Stomach (tissue), 19 donors: ENCODE measurements at regions of chr7 and their contacts with region 1.

Region 1: GRCh38 chr7:518630-519483 is 789 bp downstream of the PDGFA start:
- DNase-seq: peak; percentile 89 to 94
- H3K4me3 ChIP-seq: peak overlapping the region; percentile 67 to 85 (median 76)
- H3K27ac ChIP-seq: peak overlapping the region; percentile 92 to 95 (median 94)
- H3K4me1 ChIP-seq: peaks cover 64 to 86% (median 80%) of the 10 kb centered on the region in 4 donors
- H3K27me3 ChIP-seq: peaks cover 5 to 84% (median 47%) of the 10 kb centered on the region in 3 donors
- CTCF ChIP-seq: no peak
- EP300 ChIP-seq: no peak
- POLR2A ChIP-seq: peak in 1 of 4 donors; percentile 74

Region 2: DNA sequence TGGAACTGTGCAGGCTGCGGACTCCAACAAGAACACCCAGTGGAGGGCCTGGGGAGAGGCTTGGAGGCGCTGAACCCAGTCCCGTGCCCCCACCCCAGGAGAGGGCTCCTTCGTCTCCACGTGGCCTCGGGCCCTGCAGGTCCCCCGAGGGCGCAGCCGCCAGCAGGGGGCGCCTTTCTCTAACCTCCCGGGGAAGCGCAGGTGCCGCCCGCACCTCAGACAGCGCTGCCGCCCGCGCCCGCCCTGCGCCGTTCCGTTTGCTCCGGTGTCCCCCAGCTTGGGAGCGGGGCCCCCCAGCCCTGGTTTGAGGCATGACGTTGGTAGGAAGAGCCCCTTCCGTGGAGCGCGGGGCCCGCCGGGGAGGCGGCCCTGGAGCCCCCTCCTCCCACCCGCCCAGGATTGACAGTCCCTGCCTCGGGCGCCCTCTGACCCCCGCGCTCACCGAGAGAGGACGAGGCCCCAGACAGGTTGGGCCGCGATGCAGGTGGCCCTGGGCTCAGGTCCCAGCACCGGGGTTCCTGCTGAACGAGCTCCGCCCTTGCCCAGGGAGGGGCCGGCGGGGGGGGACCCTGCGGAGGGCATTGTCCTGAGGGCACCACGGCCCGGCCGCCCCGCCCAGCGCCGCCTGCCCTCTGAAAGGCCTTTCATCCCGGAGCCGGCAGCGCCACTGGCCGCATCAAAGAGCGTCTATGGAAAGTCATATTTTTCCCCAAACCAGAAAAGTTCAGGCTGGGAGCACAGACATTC is 186.0 kb before region 1 on chr7:
- intact Hi-C with region 1: loop called (anchors 10 kb)
- DNase-seq: peak; percentile 92 to 94
- H3K4me3 ChIP-seq: peak overlapping the region; percentile 34 to 44 (median 42)
- H3K27ac ChIP-seq: peak overlapping the region; percentile 49 to 85 (median 80)
- H3K4me1 ChIP-seq: peaks cover 21 to 41% (median 39%) of the 10 kb centered on the region in 4 donors
- H3K27me3 ChIP-seq: peaks cover 0 to 37% (median 9%) of the 10 kb centered on the region in 3 donors
- CTCF ChIP-seq: peak in 5 of 7 experiments; percentile 79 to 89 (median 87)
- EP300 ChIP-seq: no peak
- POLR2A ChIP-seq: no peak

Region 3: DNA sequence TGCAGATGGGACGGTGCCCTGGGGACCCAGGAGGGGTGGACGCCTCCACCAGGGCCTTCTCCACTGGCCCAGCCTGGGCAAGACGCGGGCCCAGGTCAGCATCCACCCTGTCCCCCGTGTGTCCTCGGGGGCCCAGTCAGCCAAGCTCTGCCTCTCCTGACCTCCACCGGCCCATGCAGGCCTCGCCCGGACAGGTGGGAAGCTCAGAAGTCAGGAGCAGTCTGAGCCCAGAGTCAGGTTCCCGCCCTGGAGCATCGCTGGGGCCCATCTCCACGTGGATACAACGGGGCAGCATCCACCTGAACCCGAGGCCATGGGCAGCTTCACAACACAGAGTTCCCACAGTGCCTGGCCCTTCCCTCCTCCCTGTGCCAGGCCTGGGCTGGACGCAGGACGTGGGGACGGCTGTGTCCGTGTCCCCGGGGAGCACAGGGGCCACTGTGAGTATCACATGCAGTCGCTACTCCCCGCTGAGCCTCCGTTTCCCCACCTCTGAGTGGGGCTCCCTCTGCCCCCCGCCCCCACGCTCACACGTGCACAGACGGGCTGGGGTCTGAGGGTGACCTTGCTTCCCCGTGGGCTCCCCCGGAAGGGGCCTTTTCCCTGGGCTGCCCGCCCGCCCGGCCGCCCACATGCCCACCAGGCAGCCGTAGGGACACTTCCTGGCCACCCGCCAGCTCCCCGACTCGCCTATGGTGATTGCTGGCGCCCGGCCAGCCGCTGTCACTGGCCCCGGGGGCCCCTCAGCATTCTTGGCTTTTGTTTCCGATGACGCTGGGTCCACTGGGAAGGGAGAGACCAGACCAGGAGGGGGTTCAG is 63.5 kb before region 1 on chr7:
- intact Hi-C with region 1: no loop called
- DNase-seq: peak; percentile 82 to 95
- H3K4me3 ChIP-seq: no peak overlapping the region
- H3K27ac ChIP-seq: no peak overlapping the region
- H3K4me1 ChIP-seq: peaks cover 8 to 29% (median 22%) of the 10 kb centered on the region in 4 donors
- H3K27me3 ChIP-seq: peaks cover 0 to 53% (median 12%) of the 10 kb centered on the region in 3 donors
- CTCF ChIP-seq: no peak
- EP300 ChIP-seq: no peak
- POLR2A ChIP-seq: no peak

Region 4: DNA sequence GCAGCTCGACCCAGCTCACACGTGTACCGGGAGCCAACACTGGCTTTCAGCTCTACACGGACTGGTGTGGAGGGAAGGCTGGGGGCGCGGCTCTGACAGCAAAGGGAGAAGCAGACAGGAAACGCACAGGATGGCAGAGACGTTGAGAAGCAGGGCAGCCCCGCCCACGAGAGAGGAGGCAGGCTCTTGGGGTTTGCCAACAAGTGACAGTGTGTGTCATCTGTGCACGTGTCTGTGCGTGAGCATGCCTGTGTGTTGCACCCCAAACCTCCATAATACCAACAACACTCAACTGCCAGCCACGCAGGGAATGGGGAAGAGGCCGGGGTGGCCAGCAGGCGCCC is 65.2 kb after region 1 on chr7:
- intact Hi-C with region 1: no loop called
- DNase-seq: peak; percentile 39 to 71
- H3K4me3 ChIP-seq: peak overlapping the region in 2 of 4 donors; percentile 13
- H3K27ac ChIP-seq: peak overlapping the region in 1 of 5 donors; percentile 33
- H3K4me1 ChIP-seq: peaks cover 0 to 8% (median 0%) of the 10 kb centered on the region in 4 donors
- H3K27me3 ChIP-seq: no peaks in the 10 kb centered on the region
- CTCF ChIP-seq: no peak
- EP300 ChIP-seq: no peak
- POLR2A ChIP-seq: no peak